Right cardiac atrium (tissue), 5 donors: ENCODE measurements at regions of chr9 and their contacts with region 1.

Region 1: DNA sequence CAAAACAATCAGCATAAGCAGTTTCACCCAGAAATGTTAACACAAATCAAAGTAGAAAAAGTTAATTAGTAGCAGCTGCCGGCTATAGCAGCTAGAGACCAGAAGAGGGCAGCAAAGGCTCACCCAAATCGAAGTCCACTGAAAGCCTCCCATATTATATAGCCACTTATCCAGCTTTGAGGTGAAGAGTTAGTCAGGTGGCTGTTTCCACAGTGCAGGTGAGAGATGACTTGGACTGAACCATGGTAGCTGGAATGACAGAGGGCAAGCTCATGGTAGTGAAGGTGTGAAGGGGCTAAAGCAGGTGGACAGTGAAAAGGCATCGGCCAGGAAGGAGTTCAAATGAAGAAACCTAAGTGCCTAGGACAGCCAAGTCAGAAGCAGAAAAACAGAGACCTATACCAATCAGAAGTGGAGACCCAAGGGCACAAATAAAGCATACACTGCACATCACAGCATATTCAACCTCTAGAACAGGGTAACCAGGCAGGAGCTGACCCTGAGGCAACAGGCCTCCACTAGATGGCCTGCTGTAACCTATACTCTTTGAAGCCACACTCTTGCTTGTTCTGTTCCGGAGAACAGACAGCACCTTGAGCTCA is 7.2 kb upstream of the RNF38 start:
- DNase-seq: peak in 2 of 3 donors; percentile 19 to 56
- ATAC-seq: peak; percentile 73 to 83
- H3K4me3 ChIP-seq: no peak overlapping the region
- H3K27ac ChIP-seq: no peak overlapping the region
- H3K4me1 ChIP-seq: no peaks in the 10 kb centered on the region
- H3K27me3 ChIP-seq: no peaks in the 10 kb centered on the region

Region 2: DNA sequence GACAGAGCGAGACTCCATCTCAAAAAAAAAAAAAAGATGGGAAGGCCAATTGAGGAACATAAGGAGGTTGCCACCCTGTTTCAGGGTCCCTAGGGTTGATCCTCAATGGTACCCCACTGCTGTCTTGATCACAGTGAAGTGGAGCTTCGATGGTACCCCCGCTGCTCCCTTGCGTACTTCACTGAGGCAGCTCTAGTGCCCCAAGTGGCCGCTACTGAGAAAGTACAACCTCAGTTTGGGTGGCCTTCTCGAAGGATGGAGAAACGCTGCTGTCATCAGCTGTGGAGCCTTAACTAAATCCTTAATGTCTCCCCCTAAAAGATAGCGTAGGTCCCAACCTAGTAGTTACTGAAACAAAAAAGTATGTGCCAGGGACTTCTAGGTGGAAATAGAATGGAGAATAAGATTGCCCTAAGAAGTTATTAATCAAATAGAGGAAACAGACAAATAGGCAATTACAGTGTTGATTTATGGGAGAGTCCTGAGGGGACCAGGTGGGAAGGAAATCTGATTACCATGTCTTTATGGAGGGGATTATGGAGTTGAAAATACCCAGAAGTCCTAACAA is 795.9 kb before region 1 on chr9:
- intact Hi-C with region 1: no loop called
- DNase-seq: peak in 2 of 3 donors; percentile 45 to 75
- ATAC-seq: peak; percentile 36 to 58
- H3K4me3 ChIP-seq: no peak overlapping the region
- H3K27ac ChIP-seq: no peak overlapping the region
- H3K4me1 ChIP-seq: peaks cover 3% of the 10 kb centered on the region
- H3K27me3 ChIP-seq: no peaks in the 10 kb centered on the region

Region 3: DNA sequence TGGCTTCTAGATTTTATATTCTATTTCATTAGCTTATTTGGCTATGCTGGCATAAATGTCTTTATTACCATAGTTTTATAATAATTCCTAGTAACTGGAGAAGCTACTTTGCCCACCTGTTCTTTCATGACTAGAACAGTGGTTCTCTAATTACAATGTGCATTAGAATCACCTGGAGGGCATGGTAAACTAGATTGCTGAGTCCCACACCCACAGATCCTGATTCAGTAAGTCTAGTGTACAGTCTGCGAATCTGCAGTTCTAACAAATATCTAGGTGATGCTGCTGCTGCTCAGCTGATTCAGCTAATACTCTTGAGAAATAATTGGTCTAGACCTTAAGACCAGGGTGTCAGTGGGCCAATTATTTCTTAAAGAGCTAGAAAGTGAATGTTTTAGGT is 42.6 kb before region 1 on chr9:
- intact Hi-C with region 1: no loop called
- DNase-seq: no peak
- ATAC-seq: no peak
- H3K4me3 ChIP-seq: no peak overlapping the region
- H3K27ac ChIP-seq: no peak overlapping the region
- H3K4me1 ChIP-seq: no peaks in the 10 kb centered on the region
- H3K27me3 ChIP-seq: no peaks in the 10 kb centered on the region

Region 4: GRCh38 chr9:36450110-36450732 is 43.0 kb after region 1 on chr9:
- intact Hi-C with region 1: loop called in 3 of 4 experiments (anchors 5 kb)
- DNase-seq: no peak
- ATAC-seq: no peak
- H3K4me3 ChIP-seq: no peak overlapping the region
- H3K27ac ChIP-seq: no peak overlapping the region
- H3K4me1 ChIP-seq: peaks cover 2% of the 10 kb centered on the region
- H3K27me3 ChIP-seq: no peaks in the 10 kb centered on the region

Region 5: DNA sequence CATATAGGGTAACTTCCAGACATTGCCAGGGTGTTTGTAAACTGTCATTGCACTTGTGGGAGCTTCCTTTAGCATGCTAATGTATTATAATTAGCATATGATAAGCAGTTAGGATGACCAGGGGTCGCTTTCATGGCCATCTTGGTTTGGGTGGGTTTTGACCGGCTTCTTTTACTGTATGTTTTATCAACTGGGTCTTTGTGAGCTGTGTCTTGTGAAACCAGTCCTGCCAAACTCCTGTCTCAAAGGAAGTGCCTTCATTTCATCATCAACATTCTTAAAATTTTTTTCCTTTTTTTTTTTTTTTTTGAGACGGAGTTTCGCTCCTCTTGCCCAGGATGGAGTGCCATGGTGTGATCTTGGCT is 153.6 kb after region 1 on chr9:
- intact Hi-C with region 1: loop called (anchors 1 to 10 kb)
- DNase-seq: no peak
- ATAC-seq: no peak
- H3K4me3 ChIP-seq: no peak overlapping the region
- H3K27ac ChIP-seq: no peak overlapping the region
- H3K4me1 ChIP-seq: no peaks in the 10 kb centered on the region
- H3K27me3 ChIP-seq: no peaks in the 10 kb centered on the region